Esophagus squamous epithelium (tissue), 5 donors: ENCODE measurements at regions of chr6 and their contacts with region 1.

Region 1: DNA sequence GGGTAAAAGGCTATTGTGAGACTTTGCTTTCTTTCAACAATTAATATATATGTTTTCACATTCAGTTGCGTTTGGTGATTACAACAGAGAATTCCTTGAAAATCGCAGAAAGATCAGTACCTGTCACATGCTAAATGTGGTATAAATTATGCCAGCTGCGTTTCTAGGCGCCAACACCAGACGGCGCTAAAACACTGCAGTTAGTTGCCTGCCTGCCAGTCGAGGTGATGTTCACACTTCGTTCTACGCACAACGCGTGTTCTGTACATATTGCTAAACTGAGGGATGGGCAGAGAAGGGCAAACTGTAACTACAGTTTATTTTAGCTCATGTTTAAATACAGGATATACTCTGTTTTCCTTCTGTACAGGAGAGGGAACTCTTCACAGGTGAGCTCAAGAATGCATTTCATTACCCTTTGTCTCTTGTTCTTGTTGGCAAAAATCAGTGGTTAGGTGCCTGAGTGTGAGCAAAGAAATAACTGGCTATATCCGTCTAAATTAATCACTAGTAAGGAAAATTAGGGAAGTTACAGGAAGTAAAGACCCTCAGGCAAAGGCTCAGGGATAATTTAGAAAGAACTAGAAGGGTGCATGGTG is 100.1 kb upstream of the RGS17 start:
- DNase-seq: no peak
- H3K4me3 ChIP-seq: no peak overlapping the region
- H3K27ac ChIP-seq: no peak overlapping the region
- H3K4me1 ChIP-seq: no peaks in the 10 kb centered on the region
- H3K27me3 ChIP-seq: no peaks in the 10 kb centered on the region
- CTCF ChIP-seq: peak; percentile 17 to 84 (median 64)
- POLR2A ChIP-seq: no peak

Region 2: GRCh38 chr6:153511896-153512496 is 280.8 kb after region 1 on chr6:
- intact Hi-C with region 1: loop called (anchors 10 kb)
- DNase-seq: no peak
- H3K4me3 ChIP-seq: no peak overlapping the region
- H3K27ac ChIP-seq: no peak overlapping the region
- H3K4me1 ChIP-seq: no peaks in the 10 kb centered on the region
- H3K27me3 ChIP-seq: no peaks in the 10 kb centered on the region
- CTCF ChIP-seq: peak in 5 of 6 experiments; percentile 20 to 54 (median 43)
- POLR2A ChIP-seq: no peak